Activated T-helper 2 cell treated with anti-CD3 and anti-CD28 coated beads, Interferon-gamma antibody, Interleukin-2, Interleukin-4, amounts not matched to agents 10 μg/mL and 5 μg/mL and 100 μg/mL, durations not matched to agents 14 hours and 24 hours and 36 hours (primary cell): ENCODE measurements at regions of chr3 and their contacts with region 1.

Region 1: GRCh38 chr3:45962033-45962432 is 18.8 kb downstream of the CXCR6 start:
- DNase-seq: no peak
- H3K4me3 Mint-ChIP-seq: no peak overlapping the region
- H3K27ac Mint-ChIP-seq: peak overlapping the region; percentile 63
- H3K4me1 Mint-ChIP-seq: peaks cover 56% of the 10 kb centered on the region
- H3K27me3 Mint-ChIP-seq: no peaks in the 10 kb centered on the region

Region 2: GRCh38 chr3:45950686-45951600 is 11.1 kb before region 1 on chr3:
- intact Hi-C with region 1: loop called (anchors 1 kb)
- DNase-seq: no peak
- H3K4me3 Mint-ChIP-seq: no peak overlapping the region
- H3K27ac Mint-ChIP-seq: peak overlapping the region; percentile 78
- H3K4me1 Mint-ChIP-seq: peaks cover 76% of the 10 kb centered on the region
- H3K27me3 Mint-ChIP-seq: no peaks in the 10 kb centered on the region

Region 3: GRCh38 chr3:45972534-45973402 is 10.7 kb after region 1 on chr3:
- intact Hi-C with region 1: loop called (anchors 1 kb)
- DNase-seq: no peak
- H3K4me3 Mint-ChIP-seq: no peak overlapping the region
- H3K27ac Mint-ChIP-seq: peak overlapping the region; percentile 78
- H3K4me1 Mint-ChIP-seq: peaks cover 77% of the 10 kb centered on the region
- H3K27me3 Mint-ChIP-seq: no peaks in the 10 kb centered on the region

Region 4: DNA sequence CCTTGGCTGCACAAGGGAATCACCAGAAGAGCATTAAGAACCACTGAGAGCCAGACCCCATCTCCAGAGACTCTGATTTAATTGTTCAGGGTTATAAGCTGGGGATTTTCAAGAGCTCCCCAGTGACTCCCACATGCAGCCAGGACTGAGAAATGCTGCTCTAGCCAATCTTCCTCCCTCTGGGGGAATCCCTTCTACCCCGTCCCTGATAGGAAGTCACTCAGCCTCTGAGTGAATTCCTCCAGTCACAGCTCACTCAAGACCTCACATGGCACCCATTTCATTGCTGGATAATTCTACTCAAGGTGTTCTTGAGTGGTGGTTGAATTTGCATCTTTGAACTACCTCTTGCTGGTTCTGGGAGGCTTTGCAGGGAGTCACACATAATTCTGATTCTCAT is 290.9 kb after region 1 on chr3:
- intact Hi-C with region 1: no loop called
- DNase-seq: no peak
- H3K4me3 Mint-ChIP-seq: no peak overlapping the region
- H3K27ac Mint-ChIP-seq: no peak overlapping the region
- H3K4me1 Mint-ChIP-seq: no peaks in the 10 kb centered on the region
- H3K27me3 Mint-ChIP-seq: peaks cover 54% of the 10 kb centered on the region